Aorta (tissue), 5 donors: ENCODE measurements at regions of chr12 and their contacts with region 1.

Region 1: GRCh38 chr12:8697476-8698131 is at the start of gene RIMKLB:
- DNase-seq: peak; percentile 89 to 95
- ATAC-seq: peak; percentile 92
- H3K4me3 ChIP-seq: peak within 1 kb of the TSS; percentile 89 to 98
- H3K27ac ChIP-seq: peak within 1 kb of the TSS; percentile 97
- H3K4me1 ChIP-seq: no peaks in the 10 kb centered on the region
- H3K27me3 ChIP-seq: no peaks in the 10 kb centered on the region
- total RNA-seq, gene RIMKLB: 76.2 to 100 TPM

Region 2: GRCh38 chr12:8032242-8033152 is 665.1 kb before region 1 on chr12 and contains the start of gene FOXJ2:
- intact Hi-C with region 1: loop called in 1 of 2 experiments (anchors 5 kb)
- DNase-seq: peak; percentile 87 to 94
- ATAC-seq: peak; percentile 92
- H3K4me3 ChIP-seq: peak within 1 kb of the TSS; percentile 67 to 99
- H3K27ac ChIP-seq: peak within 1 kb of the TSS; percentile 94 to 95
- H3K4me1 ChIP-seq: peaks cover 2 to 10% of the 10 kb centered on the region in 2 donors
- H3K27me3 ChIP-seq: no peaks in the 10 kb centered on the region
- total RNA-seq, gene FOXJ2: 29.8 to 32.1 TPM

Region 3: DNA sequence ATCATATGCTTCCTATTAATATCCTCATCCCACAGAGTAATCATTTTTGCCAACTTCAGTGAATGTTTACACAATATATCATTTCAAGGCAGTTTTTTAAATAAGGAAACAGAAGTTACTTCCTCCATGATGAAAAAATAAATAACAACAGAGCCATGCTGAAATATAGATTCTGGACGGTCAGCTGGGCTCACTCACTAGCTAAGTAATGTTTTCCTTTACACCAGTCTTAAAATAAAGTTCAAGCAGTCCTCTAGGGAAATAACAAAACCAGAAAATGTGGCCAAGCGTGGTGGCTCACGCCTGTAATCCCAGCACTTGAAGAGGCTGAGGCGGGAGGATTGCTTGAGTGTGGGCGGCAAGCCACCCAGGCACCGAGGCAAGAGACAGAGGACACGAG is 113.6 kb before region 1 on chr12:
- intact Hi-C with region 1: no loop called
- DNase-seq: no peak
- ATAC-seq: no peak
- H3K4me3 ChIP-seq: no peak overlapping the region
- H3K27ac ChIP-seq: no peak overlapping the region
- H3K4me1 ChIP-seq: no peaks in the 10 kb centered on the region
- H3K27me3 ChIP-seq: no peaks in the 10 kb centered on the region

Region 4: DNA sequence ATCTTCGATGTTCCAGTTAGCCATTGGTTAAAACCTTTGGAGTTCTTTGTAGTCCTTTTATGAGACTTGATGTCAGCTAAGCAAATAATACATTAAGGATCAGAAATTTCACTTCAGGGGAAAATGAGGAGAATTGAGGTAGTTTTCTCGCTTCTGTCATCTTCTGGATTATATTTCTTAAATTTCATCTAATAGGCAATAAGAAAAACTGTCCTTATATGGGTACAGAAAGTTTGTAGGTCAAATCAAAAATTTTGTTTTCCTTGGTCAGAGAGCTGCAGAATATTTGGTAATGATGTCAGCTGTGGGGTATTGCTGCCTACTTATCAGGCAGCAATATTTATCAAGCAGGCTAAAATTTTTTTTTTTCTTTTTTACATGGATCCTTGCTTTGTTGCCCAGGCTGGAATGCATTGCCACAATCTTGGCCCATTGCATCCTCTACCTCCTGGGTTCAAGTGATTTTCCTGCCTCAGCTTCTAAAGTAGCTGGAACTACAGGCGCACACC is 37.3 kb after region 1 on chr12:
- intact Hi-C with region 1: loop called (anchors 5 kb)
- DNase-seq: no peak
- ATAC-seq: peak; percentile 66
- H3K4me3 ChIP-seq: no peak overlapping the region
- H3K27ac ChIP-seq: peak overlapping the region; percentile 84 to 87
- H3K4me1 ChIP-seq: peaks cover 0 to 3% of the 10 kb centered on the region in 2 donors
- H3K27me3 ChIP-seq: no peaks in the 10 kb centered on the region

Region 5: DNA sequence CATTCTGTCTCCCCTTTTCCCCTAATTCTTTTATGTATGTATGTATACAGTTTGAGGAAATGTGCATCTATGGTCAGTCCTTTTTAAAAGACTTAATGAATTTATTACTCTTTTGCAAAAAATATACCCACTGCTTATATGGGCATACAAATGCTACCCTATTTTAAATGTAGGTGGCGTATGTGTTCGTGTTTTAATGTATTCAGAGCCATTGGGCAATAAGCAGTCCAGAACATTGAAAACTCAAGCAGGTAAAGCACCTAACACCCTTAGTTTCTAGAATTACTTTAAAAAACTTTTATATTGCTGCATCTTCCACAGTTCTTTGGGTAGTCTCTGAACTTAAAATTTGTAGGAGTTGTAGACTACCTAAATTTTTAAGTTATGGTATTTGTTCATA is 82.3 kb after region 1 on chr12:
- intact Hi-C with region 1: loop called (anchors 5 kb)
- DNase-seq: no peak
- ATAC-seq: no peak
- H3K4me3 ChIP-seq: no peak overlapping the region
- H3K27ac ChIP-seq: no peak overlapping the region
- H3K4me1 ChIP-seq: peaks cover 0 to 2% of the 10 kb centered on the region in 2 donors
- H3K27me3 ChIP-seq: no peaks in the 10 kb centered on the region